WTC11 (cell line): ENCODE measurements at regions of chr15 and their contacts with region 1.

Region 1: DNA sequence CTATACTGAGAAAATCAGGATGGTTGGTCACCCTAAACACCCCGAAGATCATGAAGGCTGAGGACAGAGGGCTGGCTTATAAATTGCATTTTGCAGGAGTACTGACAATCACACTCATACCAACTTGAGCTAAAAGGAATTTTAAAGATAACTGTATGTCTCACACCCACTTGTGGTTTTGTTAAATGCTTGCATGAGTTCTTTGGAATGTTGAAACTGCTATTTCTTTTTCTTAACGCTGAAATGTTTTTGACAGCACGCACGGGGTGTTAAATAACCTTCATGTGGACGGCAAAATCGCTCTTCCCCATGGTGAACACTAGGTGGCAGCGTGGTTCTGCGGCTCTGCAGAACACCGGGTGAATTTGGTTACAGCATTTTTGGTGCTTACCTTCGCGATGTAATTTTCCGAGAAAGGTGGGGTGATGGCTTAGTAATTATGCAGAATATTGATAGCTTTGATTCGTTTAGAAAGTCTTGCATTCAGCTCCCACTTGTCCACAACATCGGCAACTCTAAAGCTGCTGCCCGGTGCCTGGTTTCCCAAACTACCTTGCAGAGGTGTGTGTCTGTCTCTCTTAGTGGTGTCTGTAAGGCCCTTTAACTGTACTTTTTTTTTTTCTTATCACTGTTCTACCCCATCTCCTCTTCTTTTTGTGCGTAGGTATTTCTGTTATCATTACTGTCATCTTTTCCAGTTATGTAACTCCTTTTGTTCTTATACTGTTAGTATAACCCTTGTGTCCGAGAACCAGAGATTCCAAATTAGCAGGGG is 51.7 kb downstream of the ARNT2 start:
- DNase-seq: peak; percentile 40
- ATAC-seq: peak; percentile 74
- H3K4me3 Mint-ChIP-seq: no peak overlapping the region
- H3K27ac Mint-ChIP-seq: no peak overlapping the region
- H3K4me1 Mint-ChIP-seq: peaks cover 33% of the 10 kb centered on the region
- H3K27me3 Mint-ChIP-seq: no peaks in the 10 kb centered on the region; the same call in 1 of the 2 replicates
- CTCF ChIP-seq: peak; percentile 86

Region 2: DNA sequence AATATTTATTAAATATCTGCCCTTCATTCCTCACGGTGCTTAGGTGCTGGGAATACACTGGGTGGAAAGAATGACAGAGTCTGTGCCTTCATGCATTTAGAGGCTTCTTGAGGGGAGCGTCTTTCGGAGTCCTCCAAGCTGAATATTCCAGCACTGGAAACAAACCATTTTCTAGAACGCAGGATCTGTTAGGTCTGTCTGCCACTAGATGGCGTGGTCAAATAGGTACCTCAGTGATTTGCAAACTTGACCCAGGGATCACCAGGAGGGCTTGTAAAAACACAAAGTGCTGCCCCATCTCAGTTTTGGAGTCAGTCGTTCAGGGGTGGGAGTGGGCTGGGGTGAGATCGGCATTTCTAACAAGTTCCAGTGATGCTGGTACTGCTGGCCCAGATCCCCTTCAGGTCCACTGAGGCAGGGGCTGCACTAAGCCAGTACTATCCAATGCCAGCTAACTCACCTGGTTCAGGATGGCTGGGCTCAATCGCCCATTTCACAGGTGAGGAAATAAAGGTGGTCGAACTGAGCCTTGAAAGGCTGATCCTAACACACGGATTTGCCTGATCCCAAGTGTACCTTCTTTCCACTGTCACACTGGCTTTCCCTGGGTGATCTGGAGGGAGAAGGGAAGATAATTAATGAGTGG is 36.8 kb before region 1 on chr15:
- CTCF ChIA-PET with region 1: interaction called, 12 read pairs
- POLR2A ChIA-PET with region 1: no interaction called
- DNase-seq: no peak
- ATAC-seq: peak; percentile 70
- H3K4me3 Mint-ChIP-seq: no peak overlapping the region
- H3K27ac Mint-ChIP-seq: no peak overlapping the region
- H3K4me1 Mint-ChIP-seq: peaks cover 6% of the 10 kb centered on the region; the same call in 1 of the 2 replicates
- H3K27me3 Mint-ChIP-seq: no peaks in the 10 kb centered on the region; the same call in 1 of the 2 replicates
- CTCF ChIP-seq: peak; percentile 29; the same call in 1 of the 2 replicates

Region 3: DNA sequence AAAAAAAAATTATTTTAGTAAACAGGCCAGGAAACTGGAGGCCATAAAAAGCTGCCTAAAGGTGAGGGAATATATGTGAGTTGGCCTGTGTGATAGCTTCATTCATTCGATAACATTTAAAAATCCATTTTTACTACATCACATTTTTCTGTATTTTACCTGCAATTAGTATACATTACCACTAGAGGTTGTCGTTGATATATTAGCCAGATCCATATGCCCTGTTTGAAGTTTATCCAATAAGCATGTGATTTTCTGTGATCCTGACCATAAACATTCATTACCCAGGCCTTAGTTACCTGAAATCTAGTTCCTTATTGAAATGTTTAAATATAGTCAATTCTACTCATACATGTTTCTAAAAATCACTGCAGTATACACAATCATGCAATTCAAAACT is 19.7 kb after region 1 on chr15:
- CTCF ChIA-PET with region 1: interaction called, 11 read pairs
- POLR2A ChIA-PET with region 1: no interaction called
- DNase-seq: no peak
- ATAC-seq: no peak
- H3K4me3 Mint-ChIP-seq: no peak overlapping the region
- H3K27ac Mint-ChIP-seq: no peak overlapping the region
- H3K4me1 Mint-ChIP-seq: peaks cover 52% of the 10 kb centered on the region
- H3K27me3 Mint-ChIP-seq: no peaks in the 10 kb centered on the region
- CTCF ChIP-seq: no peak

Region 4: DNA sequence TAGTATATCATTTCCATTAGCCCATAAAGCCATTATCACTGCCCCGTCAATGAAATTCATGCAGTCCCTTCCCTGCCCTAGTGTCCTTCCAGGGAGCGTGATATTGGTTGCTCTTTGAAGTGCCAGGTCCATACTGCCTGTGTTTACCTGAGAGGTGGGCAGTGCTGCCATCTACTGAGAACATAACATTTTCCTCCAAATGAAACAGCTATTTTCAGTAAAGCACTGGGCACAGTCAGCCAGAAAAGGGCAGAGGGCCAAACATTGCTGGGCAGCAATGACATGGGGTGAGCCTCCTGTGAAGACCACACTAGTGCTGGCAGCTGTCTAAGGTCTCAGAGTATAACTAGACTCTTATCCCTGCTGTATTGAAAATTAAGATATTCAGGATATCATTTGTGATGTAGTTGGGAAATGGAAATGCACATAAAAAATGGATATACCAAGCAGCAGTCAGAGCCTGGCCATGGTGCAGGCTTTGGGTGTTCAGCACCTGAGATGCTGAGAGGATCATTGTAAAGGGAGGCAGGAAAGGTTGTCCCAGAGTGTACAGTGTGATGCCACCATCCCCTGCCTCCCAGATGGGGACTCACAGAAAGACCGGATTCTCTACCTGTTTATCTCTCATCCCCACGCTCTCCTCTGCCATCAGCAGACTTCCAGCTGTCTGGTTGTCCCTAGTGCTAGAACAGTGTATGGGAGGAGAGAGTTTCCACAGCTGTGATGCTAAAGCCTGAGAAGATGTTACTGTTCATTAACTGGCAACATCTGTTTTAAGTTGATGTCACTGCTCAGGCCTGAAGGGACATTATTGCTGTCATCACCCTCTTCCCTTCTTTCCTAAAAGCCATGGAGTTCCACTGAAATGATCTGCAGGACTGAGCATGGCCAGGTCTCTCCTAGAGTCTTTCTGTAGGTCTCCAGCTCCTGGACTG is 57.1 kb after region 1 on chr15:
- CTCF ChIA-PET with region 1: interaction called, 13 read pairs
- POLR2A ChIA-PET with region 1: no interaction called
- DNase-seq: no peak
- ATAC-seq: peak; percentile 62
- H3K4me3 Mint-ChIP-seq: no peak overlapping the region
- H3K27ac Mint-ChIP-seq: no peak overlapping the region
- H3K4me1 Mint-ChIP-seq: no peaks in the 10 kb centered on the region
- H3K27me3 Mint-ChIP-seq: no peaks in the 10 kb centered on the region
- CTCF ChIP-seq: no peak

Region 5: DNA sequence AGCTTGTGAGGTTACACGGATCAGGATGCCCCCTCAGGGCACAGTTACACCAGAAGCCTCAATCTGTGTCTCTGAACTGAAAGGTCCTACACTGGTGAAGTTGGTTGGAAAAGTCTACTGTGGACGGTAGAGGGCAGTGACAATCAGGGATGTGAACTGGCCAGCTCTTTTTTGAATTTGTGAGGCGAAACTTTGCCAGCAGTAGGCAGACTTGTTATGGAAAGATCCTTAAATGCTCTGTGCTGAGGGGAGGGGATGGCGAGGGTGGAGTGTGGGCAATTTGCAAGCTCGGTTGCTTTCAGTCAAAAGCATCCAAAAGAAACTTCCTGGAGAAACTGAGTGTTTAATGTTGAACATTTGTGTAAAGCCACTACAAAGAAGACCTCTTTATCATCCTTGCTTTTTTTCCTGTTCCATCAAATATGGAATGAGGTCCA is 111.9 kb after region 1 on chr15:
- CTCF ChIA-PET with region 1: interaction called, 10 read pairs
- POLR2A ChIA-PET with region 1: no interaction called
- DNase-seq: peak; percentile 52
- ATAC-seq: peak; percentile 90
- H3K4me3 Mint-ChIP-seq: no peak overlapping the region
- H3K27ac Mint-ChIP-seq: no peak overlapping the region
- H3K4me1 Mint-ChIP-seq: peaks cover 22% of the 10 kb centered on the region
- H3K27me3 Mint-ChIP-seq: no peaks in the 10 kb centered on the region; the same call in 1 of the 2 replicates
- CTCF ChIP-seq: no peak; the same call in 1 of the 2 replicates